Posterior cingulate gyrus (tissue), 11 donors: ENCODE measurements at regions of chr15 and their contacts with region 1.

Region 1: GRCh38 chr15:34239151-34239808 is 14.5 kb downstream of the EMC4 start:
- DNase-seq: no peak

Region 2: DNA sequence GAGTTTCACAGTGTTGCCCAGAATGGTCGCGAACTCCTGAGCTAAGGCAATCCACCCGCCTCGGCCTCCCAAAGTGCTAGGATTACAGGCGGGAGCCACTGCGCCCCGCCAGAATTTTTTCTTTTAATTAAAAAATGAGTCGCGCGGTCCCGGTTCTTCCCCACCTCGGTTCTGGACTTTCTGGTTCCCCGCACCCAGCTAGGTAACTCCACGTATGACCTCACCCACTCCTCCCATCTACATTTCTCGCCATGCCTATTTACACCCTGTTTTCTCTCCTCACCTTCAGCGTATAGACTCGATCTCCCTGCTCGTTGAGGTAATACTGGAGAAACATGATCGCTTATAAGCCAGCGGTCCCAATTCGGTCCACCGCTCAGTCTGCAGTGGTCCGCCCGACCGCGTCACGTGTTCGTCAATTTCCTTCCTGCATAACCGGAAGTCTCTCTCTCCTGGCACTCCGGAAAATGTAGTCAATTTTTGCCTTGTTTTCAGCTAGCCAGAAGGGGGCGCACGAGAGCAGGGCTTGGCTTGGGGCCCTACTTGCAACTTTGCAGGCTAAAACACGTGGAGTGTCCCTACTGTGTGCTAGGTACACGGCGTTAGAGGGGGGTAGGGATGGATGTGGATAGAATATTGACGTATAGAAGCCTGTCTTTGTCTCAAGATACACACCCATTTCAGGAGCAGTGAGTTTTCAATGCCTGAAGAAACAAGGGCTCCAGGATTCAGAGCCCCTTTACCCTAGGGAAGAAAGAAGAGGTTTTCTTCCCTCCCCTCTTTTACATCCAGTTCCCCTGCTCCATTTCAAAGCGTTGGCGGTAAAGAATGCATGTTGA is 103.7 kb after region 1 on chr15 and contains the starts of genes NOP10 and NUTM1:
- intact Hi-C with region 1: loop called (anchors 5 kb)
- DNase-seq: peak; percentile 85 to 98 (median 93)